ENCODE measurements at regions of chrX and their contacts with region 1.

Region 1: DNA sequence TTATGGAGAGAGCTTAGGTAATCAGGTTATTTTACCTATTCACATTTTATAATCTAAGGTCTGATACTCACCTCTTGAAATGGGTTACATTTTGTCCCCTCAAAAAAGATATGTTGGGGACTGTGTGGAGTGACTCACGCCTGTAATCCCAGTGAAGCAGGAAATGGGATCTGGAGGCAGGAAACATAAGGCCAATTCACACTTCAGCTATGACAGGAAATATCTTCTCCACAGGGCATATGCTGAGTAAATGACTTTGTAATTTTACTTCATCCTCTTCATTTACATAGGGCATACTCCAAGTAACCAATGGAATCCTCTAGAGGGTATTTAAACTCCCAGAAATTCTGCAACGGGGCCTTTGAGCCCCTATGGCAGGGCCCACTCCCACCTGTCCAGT is 54.8 kb upstream of the ZMAT1 start:
- DNase-seq: no peak
- ATAC-seq: no peak
- H3K4me3 ChIP-seq: no peak overlapping the region
- H3K27ac ChIP-seq: no peak overlapping the region
- H3K4me1 ChIP-seq: no peaks in the 10 kb centered on the region
- H3K27me3 ChIP-seq: no peaks in the 10 kb centered on the region
- CTCF ChIP-seq: no peak
- POLR2A ChIP-seq: no peak
- RAD21 ChIP-seq: no peak

Region 2: GRCh38 chrX:101803451-101803850 is 183.1 kb before region 1 on chrX:
- CTCF ChIA-PET with region 1: no interaction called
- POLR2A ChIA-PET with region 1: no interaction called
- RAD21 ChIA-PET with region 1: no interaction called
- intact Hi-C with region 1: no loop called
- DNase-seq: no peak
- ATAC-seq: peak; percentile 35; the same call in 1 of the 2 replicates
- H3K4me3 ChIP-seq: no peak overlapping the region
- H3K27ac ChIP-seq: no peak overlapping the region
- H3K4me1 ChIP-seq: no peaks in the 10 kb centered on the region
- H3K27me3 ChIP-seq: 0 out of 2 replicates have a peak, but pooled peaks cover 13% of the 10 kb centered on the region
- CTCF ChIP-seq: peak; percentile 36 to 59 (median 54); a peak in 5 of 6 replicates
- POLR2A ChIP-seq: no peak
- RAD21 ChIP-seq: peak; percentile 61

Region 3: GRCh38 chrX:101823236-101823635 is 163.3 kb before region 1 on chrX:
- CTCF ChIA-PET with region 1: no interaction called
- POLR2A ChIA-PET with region 1: no interaction called
- RAD21 ChIA-PET with region 1: no interaction called
- intact Hi-C with region 1: no loop called
- DNase-seq: no peak
- ATAC-seq: no peak
- H3K4me3 ChIP-seq: no peak overlapping the region
- H3K27ac ChIP-seq: no peak overlapping the region
- H3K4me1 ChIP-seq: no peaks in the 10 kb centered on the region
- H3K27me3 ChIP-seq: no peaks in the 10 kb centered on the region
- CTCF ChIP-seq: no peak
- POLR2A ChIP-seq: no peak
- RAD21 ChIP-seq: no peak

Region 4: DNA sequence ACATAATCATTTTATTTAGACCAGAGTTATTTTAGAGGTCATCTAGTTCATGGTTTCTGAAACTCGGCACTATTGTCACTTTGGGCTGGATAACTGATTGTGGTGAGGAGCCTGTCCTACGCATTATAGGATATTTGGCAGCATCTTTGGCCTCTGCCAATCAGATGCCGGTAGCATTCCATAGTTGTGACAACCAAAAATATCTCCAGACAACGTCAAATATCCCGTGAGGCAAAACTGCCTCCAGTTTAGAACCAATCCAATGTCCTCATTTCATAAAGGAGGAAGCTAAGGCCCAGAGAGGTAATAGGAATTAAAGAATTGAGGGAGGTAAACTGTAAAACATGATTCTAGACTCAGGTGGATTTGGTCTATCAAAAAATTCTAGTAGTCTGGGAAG is 60.9 kb before region 1 on chrX:
- CTCF ChIA-PET with region 1: no interaction called
- POLR2A ChIA-PET with region 1: no interaction called
- RAD21 ChIA-PET with region 1: no interaction called
- intact Hi-C with region 1: loop called (anchors 10 kb)
- DNase-seq: no peak
- ATAC-seq: no peak
- H3K4me3 ChIP-seq: no peak overlapping the region
- H3K27ac ChIP-seq: no peak overlapping the region
- H3K4me1 ChIP-seq: no peaks in the 10 kb centered on the region
- H3K27me3 ChIP-seq: no peaks in the 10 kb centered on the region
- CTCF ChIP-seq: no peak
- POLR2A ChIP-seq: no peak
- RAD21 ChIP-seq: no peak

Region 5: DNA sequence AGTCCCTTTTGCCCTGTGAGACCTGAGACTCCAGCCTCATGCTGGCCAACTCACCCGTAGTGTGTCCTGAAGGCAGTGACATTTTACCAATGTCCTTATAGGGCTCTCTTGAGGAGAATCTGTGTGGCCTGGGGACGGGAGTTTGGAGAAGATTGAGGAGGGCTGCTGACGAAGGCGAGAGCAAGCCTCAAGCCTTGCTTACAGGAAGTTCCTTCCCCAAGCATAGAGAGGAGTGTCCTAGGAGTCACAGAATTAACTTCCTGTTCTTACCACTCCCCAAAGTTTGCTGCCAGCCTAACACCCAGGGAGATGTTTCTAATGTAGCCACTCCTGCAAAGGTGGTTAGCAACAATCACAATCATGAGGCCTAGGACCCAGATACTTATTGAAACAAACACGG is 1106.4 kb after region 1 on chrX and contains the start of gene NXF3:
- CTCF ChIA-PET with region 1: no interaction called
- POLR2A ChIA-PET with region 1: no interaction called
- RAD21 ChIA-PET with region 1: no interaction called
- intact Hi-C with region 1: no loop called
- DNase-seq: no peak
- ATAC-seq: no peak
- H3K4me3 ChIP-seq: no peak within 1 kb of the TSS
- H3K27ac ChIP-seq: no peak within 1 kb of the TSS
- H3K4me1 ChIP-seq: no peaks in the 10 kb centered on the region
- H3K27me3 ChIP-seq: no peaks in the 10 kb centered on the region
- CTCF ChIP-seq: no peak
- POLR2A ChIP-seq: no peak
- RAD21 ChIP-seq: no peak
- total RNA-seq, gene NXF3: 0.25 TPM